Activated CD4-positive, alpha-beta T cell treated with anti-CD3 and anti-CD28 coated beads for 36 hours (primary cell): ENCODE measurements at regions of chr15 and their contacts with region 1.

Region 1: GRCh38 chr15:65792130-65792987 is at the start of gene DENND4A:
- DNase-seq: peak; percentile 99
- ATAC-seq: peak; percentile 80
- H3K4me3 Mint-ChIP-seq: peak within 1 kb of the TSS; percentile 80
- H3K27ac Mint-ChIP-seq: peak within 1 kb of the TSS; percentile 98
- H3K4me1 Mint-ChIP-seq: peaks cover 60% of the 10 kb centered on the region
- H3K27me3 Mint-ChIP-seq: no peaks in the 10 kb centered on the region
- total RNA-seq, gene DENND4A: 35.6 to 43.5 TPM

Region 2: GRCh38 chr15:65245096-65245856 is 547.1 kb before region 1 on chr15:
- CTCF ChIA-PET with region 1: no interaction called
- POLR2A ChIA-PET with region 1: no interaction called
- intact Hi-C with region 1: no loop called
- DNase-seq: no peak
- ATAC-seq: no peak
- H3K4me3 Mint-ChIP-seq: no peak overlapping the region
- H3K27ac Mint-ChIP-seq: no peak overlapping the region
- H3K4me1 Mint-ChIP-seq: peaks cover 16% of the 10 kb centered on the region
- H3K27me3 Mint-ChIP-seq: no peaks in the 10 kb centered on the region

Region 3: DNA sequence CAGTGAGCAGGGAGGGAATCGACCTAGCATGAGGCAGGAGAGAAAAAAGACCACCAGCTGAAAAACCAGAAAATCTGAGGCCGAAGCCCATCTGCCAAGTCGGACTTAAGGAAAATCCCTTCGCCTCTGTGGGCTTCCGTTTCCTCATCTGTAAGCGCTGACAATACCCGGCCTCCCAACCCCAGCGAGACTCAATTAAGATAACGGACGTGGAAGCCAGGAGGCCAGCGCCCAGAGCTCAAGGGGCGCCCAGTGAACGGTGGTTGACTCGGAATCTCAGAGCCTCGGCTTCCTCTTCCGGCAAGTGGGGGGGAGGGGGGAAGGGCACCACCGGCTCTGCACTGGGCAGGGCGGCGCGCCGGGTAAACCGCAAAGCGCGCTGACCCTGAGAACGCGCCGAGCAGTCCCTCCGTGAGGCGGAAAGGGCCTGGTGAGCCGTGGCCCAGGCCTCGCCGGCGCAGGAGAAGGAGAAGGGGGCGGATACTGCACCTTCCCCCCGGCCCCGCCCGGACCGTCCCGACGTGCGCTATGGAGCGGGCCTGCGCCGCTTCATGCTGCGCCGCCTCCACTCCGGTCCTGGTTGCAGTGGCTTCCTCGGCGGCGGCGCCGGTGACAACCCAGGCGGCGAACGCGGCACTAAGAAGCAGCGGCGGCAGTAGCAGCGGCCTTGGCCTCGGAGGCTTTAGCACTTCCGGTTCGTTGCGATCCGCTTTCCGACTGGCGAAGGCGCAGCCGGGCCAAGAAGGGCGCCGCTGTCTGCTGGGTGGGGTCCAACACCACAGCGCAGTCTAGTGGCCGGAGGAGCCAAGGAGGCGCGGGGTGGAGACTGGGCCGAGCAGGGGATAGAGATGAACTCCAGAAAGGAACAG is 275.1 kb before region 1 on chr15 and contains the start of gene DPP8:
- CTCF ChIA-PET with region 1: no interaction called
- POLR2A ChIA-PET with region 1: no interaction called
- intact Hi-C with region 1: loop called in 1 of 2 experiments (anchors 1 kb)
- DNase-seq: peak; percentile 97
- ATAC-seq: peak; percentile 97
- H3K4me3 Mint-ChIP-seq: peak within 1 kb of the TSS; percentile 91
- H3K27ac Mint-ChIP-seq: peak within 1 kb of the TSS; percentile 88
- H3K4me1 Mint-ChIP-seq: peaks cover 36% of the 10 kb centered on the region
- H3K27me3 Mint-ChIP-seq: no peaks in the 10 kb centered on the region
- total RNA-seq, gene DPP8: 25.8 to 26.4 TPM

Region 4: GRCh38 chr15:65818927-65819562 is 26.7 kb after region 1 on chr15:
- CTCF ChIA-PET with region 1: interaction called, 6 read pairs
- POLR2A ChIA-PET with region 1: interaction called, 32 read pairs
- intact Hi-C with region 1: loop called (anchors 1 kb)
- DNase-seq: no peak
- ATAC-seq: peak; percentile 88
- H3K4me3 Mint-ChIP-seq: peak overlapping the region; percentile 32
- H3K27ac Mint-ChIP-seq: peak overlapping the region; percentile 81
- H3K4me1 Mint-ChIP-seq: peaks cover 61% of the 10 kb centered on the region
- H3K27me3 Mint-ChIP-seq: no peaks in the 10 kb centered on the region

Region 5: DNA sequence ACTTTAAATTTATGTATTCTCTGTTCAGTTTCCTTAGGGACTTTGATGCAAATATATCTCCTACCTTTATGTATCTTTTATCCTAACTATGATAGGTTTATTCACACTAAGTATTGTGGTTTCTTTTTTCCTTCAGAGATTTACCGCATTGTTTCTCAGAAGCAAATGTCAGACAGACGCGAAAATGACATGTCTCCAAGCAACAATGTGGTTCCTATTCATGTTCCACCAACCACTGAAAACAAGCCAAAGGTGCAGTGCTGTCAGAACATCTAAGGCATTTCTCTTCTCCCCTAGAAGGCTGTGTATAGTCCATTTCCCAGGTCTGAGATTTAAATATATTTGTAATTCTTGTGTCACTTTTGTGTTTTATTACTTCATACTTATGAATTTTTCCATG is 95.2 kb after region 1 on chr15:
- CTCF ChIA-PET with region 1: no interaction called
- POLR2A ChIA-PET with region 1: no interaction called
- intact Hi-C with region 1: loop called (anchors 1 to 5 kb)
- DNase-seq: peak; percentile 67
- ATAC-seq: peak; percentile 94
- H3K4me3 Mint-ChIP-seq: no peak overlapping the region
- H3K27ac Mint-ChIP-seq: peak overlapping the region; percentile 82
- H3K4me1 Mint-ChIP-seq: peaks cover 78% of the 10 kb centered on the region
- H3K27me3 Mint-ChIP-seq: no peaks in the 10 kb centered on the region

Region 6: GRCh38 chr15:66504563-66505429 is 712.4 kb after region 1 on chr15 and contains the starts of genes RPL4 and ZWILCH:
- CTCF ChIA-PET with region 1: no interaction called
- POLR2A ChIA-PET with region 1: no interaction called
- intact Hi-C with region 1: loop called in 1 of 2 experiments (anchors 10 kb)
- DNase-seq: peak; percentile 85
- ATAC-seq: peak; percentile 89
- H3K4me3 Mint-ChIP-seq: peak within 1 kb of the TSS; percentile 88
- H3K27ac Mint-ChIP-seq: peak within 1 kb of the TSS; percentile 98
- H3K4me1 Mint-ChIP-seq: peaks cover 56% of the 10 kb centered on the region
- H3K27me3 Mint-ChIP-seq: no peaks in the 10 kb centered on the region
- total RNA-seq, gene RPL4: 4,227 to 4,959 TPM
- total RNA-seq, gene ZWILCH: 27.4 to 31.1 TPM